ENCODE measurements at regions of chr15 and their contacts with region 1.

Region 1: GRCh38 chr15:72231066-72231846 is at the start of gene PKM:
- DNase-seq: peak; percentile 66 to 96 (median 90)
- ATAC-seq: peak; percentile 22
- H3K4me3 ChIP-seq: peak within 1 kb of the TSS; percentile 83 to 95
- H3K4me3 Mint-ChIP-seq: peak within 1 kb of the TSS; percentile 99
- H3K27ac ChIP-seq: peak within 1 kb of the TSS; percentile 67 to 84
- H3K27ac Mint-ChIP-seq: peak within 1 kb of the TSS; percentile 97
- H3K4me1 ChIP-seq: peaks cover 40% of the 10 kb centered on the region
- H3K4me1 Mint-ChIP-seq: peaks cover 47% of the 10 kb centered on the region
- H3K27me3 ChIP-seq: no peaks in the 10 kb centered on the region
- H3K27me3 Mint-ChIP-seq: no peaks in the 10 kb centered on the region
- CTCF ChIP-seq: no peak
- total RNA-seq, gene PKM: 121 to 123 TPM

Region 2: GRCh38 chr15:72199711-72200212 is 31.5 kb before region 1 on chr15:
- CTCF ChIA-PET with region 1: interaction called, 29 read pairs
- POLR2A ChIA-PET with region 1: interaction called, 9 read pairs
- intact Hi-C with region 1: loop called in 1 of 2 experiments (anchors 1 kb)
- DNase-seq: peak; percentile 55 to 84 (median 77)
- ATAC-seq: peak; percentile 91
- H3K4me3 ChIP-seq: no peak overlapping the region
- H3K4me3 Mint-ChIP-seq: no peak overlapping the region
- H3K27ac ChIP-seq: no peak overlapping the region
- H3K27ac Mint-ChIP-seq: no peak overlapping the region
- H3K4me1 ChIP-seq: peaks cover 5% of the 10 kb centered on the region
- H3K4me1 Mint-ChIP-seq: peaks cover 9% of the 10 kb centered on the region
- H3K27me3 ChIP-seq: peaks cover 0 to 4% of the 10 kb centered on the region in 2 experiments
- H3K27me3 Mint-ChIP-seq: peaks cover 13% of the 10 kb centered on the region
- CTCF ChIP-seq: peak; percentile 83

Region 3: GRCh38 chr15:72217216-72217615 is 14.0 kb before region 1 on chr15:
- CTCF ChIA-PET with region 1: interaction called, 26 read pairs
- POLR2A ChIA-PET with region 1: interaction called, 4 read pairs
- intact Hi-C with region 1: no loop called
- DNase-seq: no peak
- ATAC-seq: no peak
- H3K4me3 ChIP-seq: no peak overlapping the region
- H3K4me3 Mint-ChIP-seq: no peak overlapping the region
- H3K27ac ChIP-seq: no peak overlapping the region
- H3K27ac Mint-ChIP-seq: no peak overlapping the region
- H3K4me1 ChIP-seq: peaks cover 1% of the 10 kb centered on the region
- H3K4me1 Mint-ChIP-seq: peaks cover 27% of the 10 kb centered on the region
- H3K27me3 ChIP-seq: no peaks in the 10 kb centered on the region
- H3K27me3 Mint-ChIP-seq: no peaks in the 10 kb centered on the region
- CTCF ChIP-seq: no peak

Region 4: DNA sequence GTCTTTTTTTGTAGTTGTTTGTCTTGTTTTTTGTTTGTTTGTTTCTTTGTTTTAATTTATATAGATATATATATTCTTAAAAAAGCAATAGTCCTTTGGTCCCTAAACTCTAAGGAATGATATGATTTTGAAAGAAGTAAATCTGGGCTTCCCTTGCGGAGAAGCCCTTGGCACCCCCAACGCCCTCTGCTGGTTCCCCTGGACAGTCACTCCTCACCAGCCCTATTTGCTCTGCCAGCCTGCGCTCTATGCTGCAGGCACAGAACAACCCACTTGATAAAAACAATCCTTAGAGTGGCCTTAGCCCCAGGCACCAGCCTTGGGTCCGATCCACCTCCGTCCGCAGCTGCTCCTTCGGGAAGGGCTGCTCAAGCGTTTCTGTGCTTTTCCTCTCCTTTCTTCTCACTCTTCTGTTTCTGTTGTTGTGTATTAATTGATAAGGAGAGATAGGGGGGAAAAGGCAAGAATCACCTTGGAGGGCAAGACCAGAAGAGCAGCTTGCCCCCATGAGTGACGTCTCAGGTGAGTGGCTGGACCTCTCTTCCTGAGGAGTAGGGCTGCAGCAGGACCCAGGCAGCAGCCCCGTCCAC is 54.8 kb after region 1 on chr15:
- CTCF ChIA-PET with region 1: interaction called, 19 read pairs
- POLR2A ChIA-PET with region 1: no interaction called
- intact Hi-C with region 1: no loop called
- DNase-seq: peak in 8 of 9 experiments; percentile 17 to 69 (median 58)
- ATAC-seq: peak; percentile 65
- H3K4me3 ChIP-seq: no peak overlapping the region
- H3K4me3 Mint-ChIP-seq: no peak overlapping the region
- H3K27ac ChIP-seq: no peak overlapping the region
- H3K27ac Mint-ChIP-seq: no peak overlapping the region
- H3K4me1 ChIP-seq: no peaks in the 10 kb centered on the region
- H3K4me1 Mint-ChIP-seq: no peaks in the 10 kb centered on the region
- H3K27me3 ChIP-seq: no peaks in the 10 kb centered on the region
- H3K27me3 Mint-ChIP-seq: no peaks in the 10 kb centered on the region
- CTCF ChIP-seq: peak; percentile 54

Region 5: DNA sequence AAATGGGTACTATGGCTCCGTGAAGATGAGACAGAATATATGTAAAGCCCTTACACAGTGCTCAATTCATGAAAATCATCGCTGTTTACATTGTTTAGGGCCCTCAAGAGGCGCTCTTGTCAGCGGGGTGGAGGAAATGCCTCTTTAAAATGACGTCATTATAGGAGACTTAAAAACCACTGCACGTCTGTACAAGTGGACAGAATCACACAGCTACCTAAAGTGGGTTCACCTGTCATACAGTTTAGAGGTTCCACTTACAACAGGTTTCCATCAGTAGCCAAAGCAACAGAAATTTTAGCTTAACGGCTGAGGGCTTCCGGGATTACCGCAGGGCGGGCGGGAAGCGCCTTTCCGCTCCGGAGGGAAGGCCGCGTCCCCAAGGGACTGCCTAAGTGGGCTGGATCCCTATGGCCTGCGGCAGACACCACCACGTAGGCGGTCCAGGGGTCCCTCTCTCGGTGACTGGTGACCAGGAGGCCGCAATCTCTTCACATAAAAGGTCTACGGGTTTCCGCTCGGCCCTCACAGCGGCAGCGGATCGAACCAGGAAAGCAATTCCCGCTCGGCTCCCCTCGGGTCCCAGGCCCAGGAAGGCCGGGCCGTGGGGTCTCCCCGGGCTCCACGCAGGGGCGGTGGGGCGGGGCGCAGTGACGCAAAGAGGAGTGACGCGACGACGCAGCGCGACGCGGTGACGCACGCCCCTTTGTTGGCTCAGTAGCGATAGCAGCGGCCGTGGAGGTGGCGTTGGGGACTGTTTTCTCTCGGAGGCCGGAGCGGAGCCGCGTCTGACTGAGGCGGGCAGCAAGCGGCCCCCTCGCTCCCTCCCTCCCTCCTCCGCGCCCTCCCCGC is 242.6 kb after region 1 on chr15 and contains the start of gene ARIH1:
- CTCF ChIA-PET with region 1: no interaction called
- POLR2A ChIA-PET with region 1: interaction called, 9 read pairs
- intact Hi-C with region 1: loop called (anchors 1 to 5 kb)
- DNase-seq: peak; percentile 95 to 99 (median 96)
- ATAC-seq: peak; percentile 72
- H3K4me3 ChIP-seq: peak within 1 kb of the TSS; percentile 93 to 100
- H3K4me3 Mint-ChIP-seq: peak within 1 kb of the TSS; percentile 97
- H3K27ac ChIP-seq: peak within 1 kb of the TSS; percentile 100
- H3K27ac Mint-ChIP-seq: peak within 1 kb of the TSS; percentile 99
- H3K4me1 ChIP-seq: peaks cover 46% of the 10 kb centered on the region
- H3K4me1 Mint-ChIP-seq: peaks cover 50% of the 10 kb centered on the region
- H3K27me3 ChIP-seq: no peaks in the 10 kb centered on the region
- H3K27me3 Mint-ChIP-seq: no peaks in the 10 kb centered on the region
- CTCF ChIP-seq: peak; percentile 42
- total RNA-seq, gene ARIH1: 343 to 351 TPM